Mammary epithelial cell (primary cell): ENCODE measurements at regions of chr19 and their contacts with region 1.

Region 1: DNA sequence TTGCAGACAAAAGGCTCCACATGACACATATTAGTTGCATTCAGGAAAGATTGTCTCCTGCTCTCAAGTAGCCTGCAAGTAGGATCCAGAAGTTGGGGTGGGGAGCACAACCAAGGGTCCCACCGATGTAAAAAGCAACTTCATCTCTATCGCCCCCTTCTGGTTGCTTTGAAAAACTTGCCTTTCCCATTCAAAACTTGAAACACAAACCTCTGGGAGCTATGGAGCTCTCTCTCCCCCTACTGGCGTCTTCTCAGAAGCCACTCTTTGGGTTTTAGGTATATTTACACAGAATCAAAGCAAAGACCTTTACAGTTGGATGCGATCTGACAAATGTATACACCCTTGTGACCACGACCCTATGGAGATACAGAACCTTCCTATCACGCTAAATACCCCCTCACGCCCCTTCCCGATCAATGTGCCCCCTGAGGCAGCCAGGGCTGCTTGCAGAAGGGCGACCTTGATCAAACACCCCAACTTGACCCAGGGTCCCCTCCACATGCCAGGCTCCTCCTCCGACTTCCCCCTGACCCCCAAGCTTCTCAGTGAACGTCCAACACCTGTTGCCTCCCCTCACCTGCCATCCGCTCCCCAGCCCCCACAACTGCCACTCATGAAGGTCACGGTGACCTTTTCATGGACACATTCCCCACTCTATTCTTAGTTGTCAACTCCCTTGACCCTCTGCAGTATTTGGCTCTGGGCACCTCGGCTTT is 10.1 kb downstream of the NOSIP start:
- DNase-seq: peak; percentile 58
- H3K4me3 ChIP-seq: no peak overlapping the region
- H3K27ac ChIP-seq: no peak overlapping the region
- H3K4me1 ChIP-seq: peaks cover 3% of the 10 kb centered on the region
- H3K27me3 ChIP-seq: no peaks in the 10 kb centered on the region
- CTCF ChIP-seq: peak; percentile 99 to 100

Region 2: DNA sequence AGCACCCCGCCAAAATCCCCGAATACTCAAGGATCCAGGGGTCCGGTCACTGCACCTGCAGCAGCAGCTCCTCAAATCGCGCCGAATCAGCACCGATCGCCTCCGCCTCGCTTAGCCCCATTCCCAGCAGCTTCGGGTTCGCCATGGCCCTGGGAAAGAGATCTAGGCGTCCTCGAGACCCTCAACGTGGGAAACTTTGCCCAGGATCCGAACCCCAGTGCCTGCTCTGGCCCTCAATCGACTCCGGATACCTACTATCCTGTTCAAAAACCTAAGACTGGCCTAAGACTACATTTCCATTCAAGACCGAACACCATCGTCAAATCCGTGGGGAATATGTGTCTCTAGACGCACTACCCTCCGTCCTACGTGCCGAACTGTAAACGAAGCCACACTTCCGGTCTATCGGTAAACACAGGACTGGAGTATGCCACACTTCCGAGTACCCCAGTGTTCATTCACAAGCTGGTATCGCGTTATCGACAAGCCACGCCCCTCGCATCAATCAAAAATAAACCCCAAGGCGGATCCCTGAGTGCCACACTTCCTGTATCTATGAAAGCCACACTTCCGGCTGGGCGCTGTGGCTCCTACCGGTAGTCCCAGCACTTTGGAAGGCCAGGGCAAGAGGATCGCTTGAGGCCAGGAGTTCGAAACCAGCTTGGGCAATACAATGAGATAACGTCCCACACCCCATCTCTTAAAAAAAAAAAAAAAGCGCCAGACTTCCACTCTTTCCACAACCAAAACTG is 118.7 kb before region 1 on chr19 and contains the start of gene PIH1D1:
- CTCF ChIA-PET with region 1: no interaction called
- dilution Hi-C with region 1: loop called (anchors 10 kb)
- in situ Hi-C with region 1: no loop called
- intact Hi-C with region 1: no loop called
- DNase-seq: peak; percentile 99
- H3K4me3 ChIP-seq: peak within 1 kb of the TSS; percentile 71 to 92 (median 77)
- H3K27ac ChIP-seq: peak within 1 kb of the TSS; percentile 92
- H3K4me1 ChIP-seq: peaks cover 13% of the 10 kb centered on the region
- H3K27me3 ChIP-seq: no peaks in the 10 kb centered on the region
- CTCF ChIP-seq: no peak
- total RNA-seq, gene PIH1D1: 61.2 to 62.4 TPM

Region 3: GRCh38 chr19:49473868-49474544 is 96.3 kb before region 1 on chr19 and contains the start of gene FLT3LG:
- CTCF ChIA-PET with region 1: interaction called, 13 read pairs
- dilution Hi-C with region 1: no loop called
- in situ Hi-C with region 1: no loop called
- intact Hi-C with region 1: loop called (anchors 1 kb)
- DNase-seq: peak; percentile 55
- H3K4me3 ChIP-seq: peak within 1 kb of the TSS; percentile 63 to 76 (median 72)
- H3K27ac ChIP-seq: no peak within 1 kb of the TSS
- H3K4me1 ChIP-seq: peaks cover 8% of the 10 kb centered on the region
- H3K27me3 ChIP-seq: no peaks in the 10 kb centered on the region
- CTCF ChIP-seq: peak; percentile 78 to 98
- total RNA-seq, gene FLT3LG: 0.50 to 4.2 TPM

Region 4: DNA sequence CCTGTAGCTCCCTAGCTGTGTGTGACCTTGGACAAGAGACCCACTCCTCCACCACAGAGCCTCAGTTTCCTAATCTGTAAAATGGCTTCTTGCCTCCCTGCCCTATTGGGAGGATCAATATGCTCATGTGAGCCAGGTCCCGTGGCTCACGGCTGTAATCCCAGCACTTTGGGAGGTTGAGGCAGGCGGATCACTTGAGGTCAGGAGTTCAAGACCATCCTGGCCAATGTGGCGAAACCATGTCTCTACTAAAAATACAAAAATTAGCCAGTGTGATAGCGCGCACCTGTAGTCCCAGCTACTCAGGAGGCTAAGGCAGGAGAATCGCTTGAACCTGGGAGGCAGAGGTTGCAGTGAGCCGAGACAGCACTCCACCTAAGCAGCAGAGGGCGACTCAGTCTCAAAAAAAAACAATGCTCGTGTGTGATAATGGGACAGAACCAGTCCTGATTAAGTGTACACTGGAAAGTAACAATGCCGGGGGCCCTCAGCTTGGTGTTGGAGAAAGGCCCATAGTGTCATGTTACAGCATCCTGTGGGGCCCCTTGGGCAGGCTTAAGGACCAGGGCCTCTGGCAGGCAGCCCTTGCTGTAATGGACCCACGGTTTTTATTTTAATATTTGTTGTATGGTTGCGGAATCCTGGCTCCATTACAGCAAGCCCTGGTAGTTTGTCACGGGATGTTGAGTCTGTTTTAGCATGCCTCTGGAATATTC is 67.3 kb before region 1 on chr19:
- CTCF ChIA-PET with region 1: interaction called, 4 read pairs
- dilution Hi-C with region 1: no loop called
- in situ Hi-C with region 1: loop called in 1 of 2 experiments (anchors 5 kb)
- intact Hi-C with region 1: loop called (anchors 1 kb)
- DNase-seq: peak; percentile 48
- H3K4me3 ChIP-seq: no peak overlapping the region
- H3K27ac ChIP-seq: no peak overlapping the region
- H3K4me1 ChIP-seq: peaks cover 4% of the 10 kb centered on the region
- H3K27me3 ChIP-seq: no peaks in the 10 kb centered on the region
- CTCF ChIP-seq: peak; percentile 30 to 59

Region 5: DNA sequence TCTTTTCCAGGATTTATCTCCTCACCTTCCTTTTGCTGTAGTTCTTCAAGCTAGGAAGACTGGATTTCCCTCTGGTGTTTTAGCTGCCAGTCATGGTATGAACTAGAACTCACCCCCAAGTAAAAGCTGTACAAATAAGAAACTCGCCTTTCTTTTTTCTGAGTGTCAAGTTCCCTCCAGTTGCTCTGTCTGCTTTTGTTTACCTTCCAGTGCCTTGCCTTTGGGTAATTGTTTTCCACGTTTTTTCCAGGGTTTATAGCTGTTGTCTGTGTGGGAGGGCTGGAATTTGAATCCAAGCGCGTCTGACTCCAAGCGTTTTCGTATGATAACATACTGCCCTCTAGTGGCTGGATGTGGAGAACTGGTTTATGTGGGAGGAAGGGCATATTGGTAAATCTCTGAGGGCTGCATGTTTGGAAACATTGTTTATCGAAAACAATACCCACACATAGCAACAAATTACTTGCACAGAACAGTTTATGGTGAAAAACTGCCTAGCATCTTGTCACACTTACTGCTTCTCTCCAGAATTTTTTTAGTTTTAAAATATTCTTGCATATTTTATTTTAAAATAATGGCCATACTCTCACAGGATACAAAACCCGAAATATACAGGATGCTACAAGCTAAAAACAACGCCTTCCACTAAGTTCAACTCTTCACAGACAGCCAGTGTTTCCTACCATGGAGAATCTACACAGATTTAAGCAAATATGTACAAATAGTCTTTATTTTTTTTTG is 23.3 kb before region 1 on chr19:
- CTCF ChIA-PET with region 1: no interaction called
- dilution Hi-C with region 1: no loop called
- in situ Hi-C with region 1: no loop called
- intact Hi-C with region 1: loop called (anchors 1 kb)
- DNase-seq: peak; percentile 72
- H3K4me3 ChIP-seq: no peak overlapping the region
- H3K27ac ChIP-seq: no peak overlapping the region
- H3K4me1 ChIP-seq: no peaks in the 10 kb centered on the region
- H3K27me3 ChIP-seq: no peaks in the 10 kb centered on the region
- CTCF ChIP-seq: peak; percentile 81 to 85

Region 6: GRCh38 chr19:49553451-49554271 is 16.6 kb before region 1 on chr19:
- CTCF ChIA-PET with region 1: interaction called, 9 read pairs
- dilution Hi-C with region 1: no loop called
- in situ Hi-C with region 1: no loop called
- intact Hi-C with region 1: loop called (anchors 1 kb)
- DNase-seq: peak; percentile 92
- H3K4me3 ChIP-seq: no peak overlapping the region
- H3K27ac ChIP-seq: peak overlapping the region; percentile 71
- H3K4me1 ChIP-seq: peaks cover 11% of the 10 kb centered on the region
- H3K27me3 ChIP-seq: no peaks in the 10 kb centered on the region
- CTCF ChIP-seq: no peak

Region 7: GRCh38 chr19:49869441-49870176 is 299.3 kb after region 1 on chr19:
- CTCF ChIA-PET with region 1: no interaction called
- dilution Hi-C with region 1: no loop called
- in situ Hi-C with region 1: no loop called
- intact Hi-C with region 1: loop called (anchors 10 kb)
- DNase-seq: peak; percentile 100
- H3K4me3 ChIP-seq: peak overlapping the region; percentile 28 to 55 (median 48)
- H3K27ac ChIP-seq: peak overlapping the region; percentile 35
- H3K4me1 ChIP-seq: peaks cover 30% of the 10 kb centered on the region
- H3K27me3 ChIP-seq: no peaks in the 10 kb centered on the region
- CTCF ChIP-seq: no peak